Mucosa of descending colon (tissue), 3 donors: ENCODE measurements at regions of chr7 and their contacts with region 1.

Region 1: GRCh38 chr7:43417455-43417854 is 165.5 kb upstream of the STK17A start:
- DNase-seq: no peak
- ATAC-seq: no peak
- H3K4me3 ChIP-seq: no peak overlapping the region
- H3K4me1 ChIP-seq: no peaks in the 10 kb centered on the region
- CTCF ChIP-seq: no peak

Region 2: DNA sequence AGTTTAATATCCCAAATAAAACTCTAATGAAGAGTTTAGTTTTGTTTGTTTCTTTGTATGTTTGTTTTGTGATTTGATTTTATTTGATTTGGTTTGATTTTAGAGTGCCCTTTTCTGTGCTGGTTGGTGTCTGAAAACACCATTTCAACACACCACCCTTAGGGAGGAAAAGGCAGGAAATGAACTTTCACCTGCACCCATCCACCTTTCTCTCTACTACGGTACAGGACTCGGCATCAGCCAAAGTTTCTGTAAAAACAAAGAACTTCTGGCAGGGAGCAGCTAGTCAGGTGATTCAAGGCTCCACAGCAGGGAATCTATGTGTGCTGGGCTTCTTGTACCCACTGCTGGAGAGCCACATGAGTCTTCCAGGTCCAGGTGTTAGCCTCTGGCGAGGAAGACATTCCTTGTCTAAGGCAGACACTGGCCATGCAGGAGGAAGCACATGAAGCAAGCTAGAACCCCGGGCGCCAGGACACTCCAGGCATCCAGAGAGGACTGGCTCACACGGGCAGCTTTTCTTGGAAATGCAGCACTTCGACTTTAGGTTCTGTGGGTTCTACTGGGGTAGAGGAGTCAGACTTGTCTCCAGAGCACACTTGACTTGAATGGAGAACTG is 143.4 kb after region 1 on chr7:
- intact Hi-C with region 1: loop called in 1 of 2 experiments (anchors 5 kb)
- DNase-seq: no peak
- ATAC-seq: no peak
- H3K4me3 ChIP-seq: no peak overlapping the region
- H3K4me1 ChIP-seq: no peaks in the 10 kb centered on the region
- CTCF ChIP-seq: no peak